Activated CD4-positive, alpha-beta T cell treated with anti-CD3 and anti-CD28 coated beads, Interleukin-2, amount 10 ng/mL, durations not matched to agents 24 days and 14 days (primary cell): ENCODE measurements at regions of chr2 and their contacts with region 1.

Region 1: DNA sequence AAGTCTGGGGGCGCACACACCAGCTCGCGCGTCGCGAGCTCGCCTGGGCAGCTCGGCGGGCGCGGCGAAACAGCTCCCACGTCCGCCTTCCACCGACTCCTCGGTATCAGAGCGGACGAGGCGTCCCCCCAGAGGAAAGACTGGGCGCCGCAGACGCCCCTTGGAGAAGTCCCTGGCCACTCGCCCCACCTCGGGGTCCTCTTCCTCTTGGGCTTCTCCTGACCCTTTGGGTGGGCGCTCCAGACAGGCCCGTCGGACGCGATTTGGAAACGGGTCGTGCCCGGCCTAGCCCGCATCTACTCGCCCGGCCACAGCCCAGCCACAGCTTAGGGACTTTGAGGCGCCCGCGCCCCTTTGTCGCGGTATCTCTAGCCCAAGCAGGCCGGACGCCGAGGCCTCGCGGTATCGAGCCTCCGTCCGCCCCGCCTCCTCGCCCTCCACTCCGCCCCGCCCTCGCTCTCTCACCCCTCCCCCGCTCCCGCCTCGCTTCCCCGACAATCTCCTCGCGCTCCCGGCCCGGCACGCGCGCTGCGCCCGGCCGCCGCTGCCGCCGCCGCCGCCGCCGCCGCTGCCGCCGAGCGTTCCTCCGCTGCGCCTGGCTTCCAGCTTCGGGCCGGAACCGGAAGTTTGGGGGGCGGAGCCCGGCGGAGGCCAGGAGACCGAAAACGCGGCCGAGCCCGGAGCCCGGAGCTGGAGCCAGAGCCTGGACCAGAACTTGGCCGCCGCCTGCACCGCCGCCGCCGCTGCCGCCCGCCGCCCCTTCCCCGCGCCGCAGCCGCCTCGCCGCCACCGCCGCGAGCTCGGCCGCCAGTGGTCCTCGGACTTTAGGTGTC is 749 bp upstream of the ACVR2A start:
- DNase-seq: peak; percentile 96
- H3K4me3 Mint-ChIP-seq: peak overlapping the region; percentile 93
- H3K27ac Mint-ChIP-seq: peak overlapping the region; percentile 88
- H3K4me1 Mint-ChIP-seq: peaks cover 26% of the 10 kb centered on the region
- H3K27me3 Mint-ChIP-seq: peaks cover 54% of the 10 kb centered on the region

Region 2: GRCh38 chr2:147182260-147182659 is 661.8 kb before region 1 on chr2:
- intact Hi-C with region 1: loop called (anchors 5 kb)
- DNase-seq: peak; percentile 86
- H3K4me3 Mint-ChIP-seq: peak overlapping the region; percentile 68
- H3K27ac Mint-ChIP-seq: peak overlapping the region; percentile 90
- H3K4me1 Mint-ChIP-seq: peaks cover 21% of the 10 kb centered on the region
- H3K27me3 Mint-ChIP-seq: peaks cover 2% of the 10 kb centered on the region

Region 3: DNA sequence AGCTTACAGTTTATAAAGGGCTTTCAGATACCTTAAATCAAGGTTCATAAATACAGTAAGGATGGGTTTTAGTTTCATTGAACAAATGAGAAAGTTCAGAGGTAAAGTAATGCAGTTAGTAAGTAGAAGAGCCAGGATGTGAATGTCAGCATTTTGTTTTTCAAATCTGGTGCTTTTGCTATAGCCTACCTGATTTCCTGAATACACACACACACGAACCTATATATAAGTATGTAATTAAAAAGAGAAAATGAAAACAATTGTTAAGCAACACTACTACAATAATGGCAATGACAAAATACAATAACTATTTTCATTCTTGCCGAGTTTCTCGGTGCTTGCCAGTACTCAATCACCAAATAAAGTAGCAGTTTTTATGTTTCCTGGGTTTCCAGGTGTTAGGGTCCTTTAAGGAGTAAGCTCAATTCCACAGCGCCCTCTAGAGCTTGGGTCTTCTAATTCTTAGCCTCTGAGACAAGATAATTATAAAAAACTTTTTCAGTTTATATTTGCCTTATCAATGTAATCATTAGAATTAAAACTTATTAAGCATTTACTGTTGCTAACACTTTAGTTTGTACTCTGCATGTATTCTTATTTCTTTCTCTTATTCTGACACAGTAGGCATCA is 512.2 kb before region 1 on chr2:
- intact Hi-C with region 1: loop called (anchors 10 kb)
- DNase-seq: peak; percentile 81
- H3K4me3 Mint-ChIP-seq: no peak overlapping the region
- H3K27ac Mint-ChIP-seq: no peak overlapping the region
- H3K4me1 Mint-ChIP-seq: peaks cover 16% of the 10 kb centered on the region
- H3K27me3 Mint-ChIP-seq: peaks cover 3% of the 10 kb centered on the region

Region 4: GRCh38 chr2:147623328-147623727 is 220.8 kb before region 1 on chr2:
- intact Hi-C with region 1: loop called (anchors 2 kb)
- DNase-seq: peak; percentile 72
- H3K4me3 Mint-ChIP-seq: peak overlapping the region; percentile 42
- H3K27ac Mint-ChIP-seq: peak overlapping the region; percentile 83
- H3K4me1 Mint-ChIP-seq: peaks cover 24% of the 10 kb centered on the region
- H3K27me3 Mint-ChIP-seq: no peaks in the 10 kb centered on the region

Region 5: DNA sequence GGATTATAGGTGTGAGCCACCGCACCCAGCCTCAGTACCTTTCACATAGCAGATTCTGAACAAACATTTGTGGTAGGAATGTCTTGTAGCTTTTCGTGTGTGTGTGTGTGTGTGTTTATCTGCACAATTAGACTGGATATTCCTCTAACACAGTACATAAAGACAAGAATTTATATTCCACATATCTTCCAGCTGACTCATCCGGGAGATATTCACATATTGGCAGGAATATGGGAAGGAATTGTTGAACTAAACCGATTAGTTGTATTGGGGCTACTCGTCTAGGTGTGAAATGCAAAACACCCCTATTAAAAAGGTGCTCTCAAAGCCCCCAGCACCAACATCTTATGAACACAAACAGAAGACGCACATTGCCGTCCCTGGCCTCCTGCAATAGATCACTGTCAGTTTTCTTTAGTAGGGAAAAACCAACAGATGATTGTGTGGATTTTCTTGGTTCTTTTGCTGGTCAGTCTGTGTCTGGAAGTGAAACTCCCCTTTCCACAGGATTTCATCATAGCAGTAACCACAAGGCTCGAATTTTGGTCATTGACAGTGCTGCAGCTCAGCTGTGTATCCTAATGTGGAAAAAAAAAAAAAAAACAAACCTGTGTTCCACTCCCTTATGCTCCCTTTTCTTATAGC is 207.7 kb before region 1 on chr2:
- intact Hi-C with region 1: no loop called
- DNase-seq: no peak
- H3K4me3 Mint-ChIP-seq: no peak overlapping the region
- H3K27ac Mint-ChIP-seq: peak overlapping the region; percentile 88
- H3K4me1 Mint-ChIP-seq: peaks cover 14% of the 10 kb centered on the region
- H3K27me3 Mint-ChIP-seq: no peaks in the 10 kb centered on the region

Region 6: DNA sequence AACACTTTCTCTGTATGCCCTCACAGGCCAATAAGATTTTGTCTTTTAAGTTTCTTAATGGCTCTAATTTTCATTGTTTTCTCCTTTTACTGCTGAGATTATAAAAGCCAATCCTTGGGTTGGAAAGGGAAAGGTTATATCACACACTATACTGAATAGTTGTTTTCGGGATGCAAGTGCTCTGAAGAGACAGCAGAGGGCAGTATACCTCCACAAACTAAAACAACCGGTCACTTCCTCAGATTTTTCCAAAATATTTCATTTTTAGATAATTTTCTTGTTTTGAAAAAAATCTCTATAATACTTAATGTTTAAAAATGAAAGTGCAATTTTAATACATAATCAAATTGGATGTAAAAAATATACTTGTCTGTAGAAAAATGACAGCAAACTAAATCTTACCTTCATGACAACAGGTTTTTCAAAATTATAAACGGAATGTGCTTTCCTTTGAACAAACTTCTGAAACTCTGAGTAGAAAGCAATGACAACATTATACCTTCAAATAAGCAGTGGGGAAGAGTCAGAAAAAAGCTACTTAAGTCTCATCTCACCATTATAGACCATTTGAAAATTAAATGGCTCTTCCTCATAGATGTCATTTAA is 93.8 kb after region 1 on chr2:
- intact Hi-C with region 1: no loop called
- DNase-seq: no peak
- H3K4me3 Mint-ChIP-seq: no peak overlapping the region
- H3K27ac Mint-ChIP-seq: no peak overlapping the region
- H3K4me1 Mint-ChIP-seq: peaks cover 2% of the 10 kb centered on the region
- H3K27me3 Mint-ChIP-seq: no peaks in the 10 kb centered on the region

Region 7: GRCh38 chr2:148020111-148021058 is 176.3 kb after region 1 on chr2 and contains the start of gene ORC4:
- intact Hi-C with region 1: loop called (anchors 2 kb)
- DNase-seq: peak; percentile 98
- H3K4me3 Mint-ChIP-seq: peak within 1 kb of the TSS; percentile 94
- H3K27ac Mint-ChIP-seq: peak within 1 kb of the TSS; percentile 93
- H3K4me1 Mint-ChIP-seq: peaks cover 45% of the 10 kb centered on the region
- H3K27me3 Mint-ChIP-seq: no peaks in the 10 kb centered on the region
- total RNA-seq, gene ORC4: 27.0 and 36.2 TPM in 2 replicates